ENCODE measurements at regions of chr19 and their contacts with region 1.

Region 1: GRCh38 chr19:40716655-40717324 is at the starts of genes COQ8B and ITPKC:
- DNase-seq: peak; percentile 96 to 99
- H3K4me3 ChIP-seq: peak within 1 kb of the TSS; percentile 72 to 100
- H3K27ac ChIP-seq: peak within 1 kb of the TSS; percentile 97 to 99
- H3K4me1 ChIP-seq: peaks cover 7 to 39% of the 10 kb centered on the region in 2 donors
- H3K27me3 ChIP-seq: no peaks in the 10 kb centered on the region
- CTCF ChIP-seq: peak in 1 of 3 experiments; percentile 69
- total RNA-seq, gene COQ8B: 33.3 TPM
- total RNA-seq, gene ITPKC: 60.7 TPM

Region 2: GRCh38 chr19:39397360-39398296 is 1319.2 kb before region 1 on chr19:
- intact Hi-C with region 1: loop called (anchors 10 kb)
- DNase-seq: peak; percentile 50 to 95
- H3K4me3 ChIP-seq: no peak overlapping the region
- H3K27ac ChIP-seq: peak overlapping the region; percentile 80 to 82
- H3K4me1 ChIP-seq: peaks cover 4 to 15% of the 10 kb centered on the region in 2 donors
- H3K27me3 ChIP-seq: no peaks in the 10 kb centered on the region
- CTCF ChIP-seq: peak; percentile 96 to 97 (median 97)

Region 3: DNA sequence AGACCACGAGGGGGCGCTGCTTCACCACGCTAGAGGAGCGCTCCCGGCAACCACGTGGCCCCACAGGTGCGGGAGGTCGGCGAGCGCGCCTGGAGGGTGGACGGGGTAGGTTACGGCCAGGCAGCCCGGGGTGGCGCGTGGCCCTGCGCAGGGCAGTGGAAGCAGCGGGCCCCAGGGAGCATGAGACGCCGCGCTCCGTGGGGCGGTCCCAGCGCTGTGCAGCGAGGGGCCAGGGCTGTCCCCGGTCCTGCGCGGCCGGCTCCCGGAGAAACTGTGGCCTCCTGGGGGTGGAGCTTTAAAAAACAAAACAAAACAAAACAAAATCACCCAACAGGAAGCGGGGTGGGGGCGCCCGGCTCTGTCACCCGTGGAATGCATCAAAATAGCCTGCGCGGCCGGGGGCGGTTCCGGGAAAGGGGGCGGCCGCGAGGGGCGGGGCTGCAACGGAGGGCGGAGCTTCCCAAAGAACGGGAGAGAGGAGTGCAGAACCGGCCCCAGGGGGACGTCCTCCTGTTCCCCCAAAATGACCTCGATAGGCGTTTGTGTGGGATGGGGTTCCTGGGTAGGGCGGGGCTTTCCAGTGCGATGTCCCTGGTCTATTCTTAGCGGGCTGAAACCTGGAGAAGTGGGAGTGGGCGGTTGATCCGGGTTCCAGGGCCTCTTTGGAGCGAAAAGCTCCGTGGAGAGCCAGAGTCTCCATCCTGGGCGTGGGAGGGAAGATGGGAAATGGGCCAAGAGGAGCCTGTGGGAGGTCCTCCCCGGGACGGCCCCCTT is 53.7 kb before region 1 on chr19:
- intact Hi-C with region 1: loop called (anchors 1 kb)
- DNase-seq: peak; percentile 40 to 95
- H3K4me3 ChIP-seq: peak overlapping the region; percentile 64 to 77
- H3K27ac ChIP-seq: peak overlapping the region; percentile 80 to 84
- H3K4me1 ChIP-seq: peaks cover 3 to 13% of the 10 kb centered on the region in 2 donors
- H3K27me3 ChIP-seq: no peaks in the 10 kb centered on the region
- CTCF ChIP-seq: peak in 2 of 3 experiments; percentile 99 to 100

Region 4: GRCh38 chr19:40750059-40750873 is 33.5 kb after region 1 on chr19 and contains the start of gene ACTMAP:
- intact Hi-C with region 1: loop called (anchors 1 kb)
- DNase-seq: peak; percentile 99 to 100
- H3K4me3 ChIP-seq: peak within 1 kb of the TSS; percentile 65 to 80
- H3K27ac ChIP-seq: peak within 1 kb of the TSS; percentile 89 to 93
- H3K4me1 ChIP-seq: peaks cover 12 to 32% of the 10 kb centered on the region in 2 donors
- H3K27me3 ChIP-seq: no peaks in the 10 kb centered on the region
- CTCF ChIP-seq: no peak
- total RNA-seq, gene ACTMAP: 8.3 TPM

Region 5: DNA sequence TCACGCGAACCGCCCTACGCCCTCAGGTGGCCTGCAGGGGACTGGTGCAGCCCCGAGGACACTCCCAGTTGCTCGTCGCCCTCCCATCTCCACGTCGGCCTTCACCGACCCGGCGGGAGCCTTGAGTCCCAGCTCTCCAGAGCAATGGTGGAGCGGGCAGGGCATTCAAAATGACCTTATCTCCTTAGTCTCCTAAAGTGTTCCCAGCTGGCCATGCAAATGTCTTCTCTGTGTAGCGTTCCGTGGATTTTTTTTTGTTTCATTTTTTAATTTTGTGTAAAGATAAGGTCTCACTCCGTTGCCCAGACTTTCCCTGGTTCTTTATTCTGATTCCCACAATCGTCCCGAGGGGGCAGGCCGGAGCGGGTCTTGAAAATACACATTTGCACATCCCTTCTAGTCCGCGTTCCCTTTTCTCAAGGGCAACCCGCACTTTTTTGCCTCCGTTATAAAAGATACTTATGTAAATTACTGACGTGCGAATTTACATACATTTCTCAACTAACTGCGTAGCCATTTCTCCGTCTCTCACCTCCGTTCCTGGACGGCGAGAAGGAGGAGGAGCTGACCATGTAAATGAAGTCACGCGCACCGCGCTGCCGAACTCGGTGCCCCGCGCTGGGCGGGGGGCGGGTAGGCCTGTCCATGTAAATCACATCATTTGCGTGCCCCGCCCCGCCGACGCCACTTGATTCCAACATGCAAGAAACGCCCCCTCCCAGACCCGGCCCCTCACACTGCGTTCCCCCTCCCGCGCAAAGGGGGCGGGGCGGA is 81.6 kb after region 1 on chr19:
- intact Hi-C with region 1: loop called (anchors 1 kb)
- DNase-seq: peak; percentile 100
- H3K4me3 ChIP-seq: peak overlapping the region; percentile 55 to 99
- H3K27ac ChIP-seq: peak overlapping the region; percentile 89 to 95
- H3K4me1 ChIP-seq: peaks cover 28 to 40% of the 10 kb centered on the region in 2 donors
- H3K27me3 ChIP-seq: no peaks in the 10 kb centered on the region
- CTCF ChIP-seq: peak; percentile 28 to 54 (median 48)

Region 6: GRCh38 chr19:41263850-41264580 is 547.2 kb after region 1 on chr19 and contains the start of gene HNRNPUL1:
- intact Hi-C with region 1: loop called (anchors 5 kb)
- DNase-seq: peak; percentile 97 to 99
- H3K4me3 ChIP-seq: peak within 1 kb of the TSS; percentile 81 to 82
- H3K27ac ChIP-seq: peak within 1 kb of the TSS; percentile 94 to 98
- H3K4me1 ChIP-seq: peaks cover 9 to 22% of the 10 kb centered on the region in 2 donors
- H3K27me3 ChIP-seq: no peaks in the 10 kb centered on the region
- CTCF ChIP-seq: peak; percentile 25 to 44 (median 40)
- total RNA-seq, gene HNRNPUL1: 81.1 TPM

Measured in ascending aorta (tissue), 2 donors.